CD4-positive, alpha-beta memory T cell (primary cell): ENCODE measurements at regions of chr10 and their contacts with region 1.

Region 1: GRCh38 chr10:5723692-5724091 is 39.1 kb downstream of the TASOR2 start:
- DNase-seq: no peak
- H3K4me3 ChIP-seq: no peak overlapping the region
- H3K4me3 Mint-ChIP-seq: no peak overlapping the region
- H3K27ac ChIP-seq: no peak overlapping the region
- H3K27ac Mint-ChIP-seq: peak overlapping the region in 1 of 7 donors; percentile 60
- H3K4me1 ChIP-seq: peaks cover 3% of the 10 kb centered on the region
- H3K4me1 Mint-ChIP-seq: peaks cover 5 to 17% (median 13%) of the 10 kb centered on the region in 4 donors
- H3K27me3 ChIP-seq: no peaks in the 10 kb centered on the region
- H3K27me3 Mint-ChIP-seq: no peaks in the 10 kb centered on the region

Region 2: DNA sequence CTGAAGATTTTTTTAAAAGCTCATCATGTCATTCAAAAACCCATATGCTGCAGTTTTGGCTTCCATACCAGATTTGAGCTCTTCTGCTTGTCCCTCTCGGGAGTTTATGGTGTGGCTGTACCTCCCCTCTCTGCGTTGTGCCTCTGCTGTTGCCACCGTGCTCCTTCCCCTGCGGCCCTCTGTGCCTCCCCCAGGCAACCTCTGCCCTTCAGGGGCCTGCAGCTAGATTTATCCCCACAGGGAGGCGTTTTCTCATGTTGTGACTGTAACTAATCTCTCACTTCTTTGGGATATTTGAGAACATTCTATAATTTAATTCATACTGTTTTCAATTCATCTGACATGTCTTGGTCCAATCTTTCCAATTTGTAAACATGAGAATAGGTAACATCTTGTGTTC is 13.7 kb after region 1 on chr10:
- CTCF ChIA-PET with region 1: no interaction called
- POLR2A ChIA-PET with region 1: no interaction called
- intact Hi-C with region 1: no loop called
- DNase-seq: peak in 1 of 5 donors; percentile 7
- H3K4me3 ChIP-seq: no peak overlapping the region
- H3K4me3 Mint-ChIP-seq: no peak overlapping the region
- H3K27ac ChIP-seq: no peak overlapping the region
- H3K27ac Mint-ChIP-seq: peak overlapping the region in 4 of 7 donors; percentile 44 to 90 (median 67)
- H3K4me1 ChIP-seq: no peaks in the 10 kb centered on the region
- H3K4me1 Mint-ChIP-seq: peaks cover 3 to 26% (median 15%) of the 10 kb centered on the region in 4 donors
- H3K27me3 ChIP-seq: no peaks in the 10 kb centered on the region
- H3K27me3 Mint-ChIP-seq: no peaks in the 10 kb centered on the region

Region 3: GRCh38 chr10:5927306-5927705 is 203.6 kb after region 1 on chr10:
- CTCF ChIA-PET with region 1: no interaction called
- POLR2A ChIA-PET with region 1: no interaction called
- intact Hi-C with region 1: no loop called
- DNase-seq: no peak
- H3K4me3 ChIP-seq: no peak overlapping the region
- H3K4me3 Mint-ChIP-seq: no peak overlapping the region
- H3K27ac ChIP-seq: no peak overlapping the region
- H3K27ac Mint-ChIP-seq: peak overlapping the region in 1 of 7 donors; percentile 37
- H3K4me1 ChIP-seq: no peaks in the 10 kb centered on the region
- H3K4me1 Mint-ChIP-seq: no peaks in the 10 kb centered on the region
- H3K27me3 ChIP-seq: no peaks in the 10 kb centered on the region
- H3K27me3 Mint-ChIP-seq: no peaks in the 10 kb centered on the region

Region 4: DNA sequence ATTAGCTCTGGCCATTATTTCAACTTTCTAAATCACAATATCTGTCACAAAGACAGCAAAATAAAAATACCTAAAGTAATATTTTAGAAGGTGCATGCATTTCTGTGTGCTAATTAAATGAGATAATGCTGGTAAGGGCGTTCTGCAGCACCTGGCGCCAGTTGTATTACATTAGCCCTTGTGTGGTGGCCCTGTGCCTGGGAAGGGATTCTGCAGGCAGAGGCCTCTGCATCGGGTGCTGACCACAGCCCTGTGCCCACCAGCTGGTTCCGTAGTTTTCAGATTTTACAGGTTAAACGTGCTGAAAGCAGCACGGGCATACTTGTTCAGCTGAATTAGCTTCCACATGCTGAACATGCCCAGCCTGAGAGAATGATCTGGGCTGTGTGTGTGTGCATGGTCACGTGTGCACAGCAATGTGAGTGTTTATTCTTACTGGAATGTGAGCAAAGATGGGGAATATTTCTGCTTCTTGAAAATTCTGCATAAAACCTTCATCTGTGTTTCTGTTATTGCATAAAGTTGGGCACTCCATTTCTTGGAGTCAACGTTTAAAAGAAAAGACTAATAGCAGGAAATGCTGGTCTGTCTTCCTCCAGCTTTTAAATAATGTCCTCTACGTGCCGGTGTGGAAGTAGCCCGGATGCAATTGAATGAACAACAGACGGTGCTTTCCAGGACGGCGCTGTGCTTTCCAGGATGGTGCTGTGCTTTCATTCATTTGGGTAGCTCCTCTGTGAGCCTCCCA is 1014.2 kb after region 1 on chr10:
- CTCF ChIA-PET with region 1: no interaction called
- POLR2A ChIA-PET with region 1: no interaction called
- intact Hi-C with region 1: loop called (anchors 5 kb)
- DNase-seq: no peak
- H3K4me3 ChIP-seq: no peak overlapping the region
- H3K4me3 Mint-ChIP-seq: no peak overlapping the region
- H3K27ac ChIP-seq: no peak overlapping the region
- H3K27ac Mint-ChIP-seq: no peak overlapping the region
- H3K4me1 ChIP-seq: no peaks in the 10 kb centered on the region
- H3K4me1 Mint-ChIP-seq: peaks cover 0 to 3% (median 0%) of the 10 kb centered on the region in 4 donors
- H3K27me3 ChIP-seq: no peaks in the 10 kb centered on the region
- H3K27me3 Mint-ChIP-seq: peaks cover 22 to 44% of the 10 kb centered on the region in 2 donors